ENCODE measurements at regions of chr17 and their contacts with region 1.

Region 1: DNA sequence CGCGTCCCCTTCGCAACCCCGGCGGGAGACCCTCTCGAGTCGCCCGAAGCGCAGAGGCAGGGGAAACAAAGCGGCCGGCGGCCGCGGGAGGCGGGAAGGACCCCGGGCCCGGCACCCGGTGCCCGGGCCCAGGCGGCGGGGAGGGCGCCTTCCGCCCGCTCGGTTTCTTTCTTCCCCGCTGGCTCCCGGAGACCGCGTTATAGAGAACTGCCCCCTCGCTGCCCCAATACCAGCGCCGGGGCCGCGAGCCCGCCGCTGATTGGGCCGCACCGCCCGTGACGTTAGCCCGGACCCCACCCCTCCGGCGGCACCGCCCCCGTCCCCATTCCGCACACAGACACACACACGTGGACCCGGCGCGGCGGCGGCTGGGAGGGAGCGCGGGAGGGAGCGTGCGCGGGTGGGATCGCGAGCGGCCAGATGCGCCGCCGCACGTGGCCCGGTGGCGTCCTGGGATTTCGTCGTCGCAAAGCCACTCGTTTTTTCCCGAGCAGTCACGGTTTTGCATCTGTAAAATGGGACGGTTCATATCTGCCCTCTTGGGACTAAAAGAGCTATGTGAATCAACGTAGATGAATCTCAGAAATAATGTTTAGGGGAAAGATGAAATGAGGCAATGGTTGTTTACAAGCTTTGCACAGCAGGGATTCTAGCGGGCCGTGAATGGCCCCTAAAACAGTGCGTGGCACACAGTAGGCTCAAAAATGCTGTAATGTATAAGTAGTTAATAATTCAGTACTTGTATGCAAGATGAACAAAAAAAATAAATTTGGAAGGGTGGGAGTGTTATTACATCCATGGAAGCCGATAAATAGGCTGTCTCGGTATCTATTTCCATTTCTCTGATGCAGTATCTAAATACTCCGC is at the start of gene EPOP:
- DNase-seq: peak; percentile 93
- ATAC-seq: peak; percentile 77
- H3K4me3 Mint-ChIP-seq: peak within 1 kb of the TSS; percentile 76
- H3K27ac Mint-ChIP-seq: peak within 1 kb of the TSS; percentile 75
- H3K4me1 Mint-ChIP-seq: peaks cover 41% of the 10 kb centered on the region
- H3K27me3 Mint-ChIP-seq: peaks cover 15% of the 10 kb centered on the region
- CTCF ChIP-seq: no peak
- total RNA-seq, gene EPOP: 31.8 to 32.2 TPM

Region 2: DNA sequence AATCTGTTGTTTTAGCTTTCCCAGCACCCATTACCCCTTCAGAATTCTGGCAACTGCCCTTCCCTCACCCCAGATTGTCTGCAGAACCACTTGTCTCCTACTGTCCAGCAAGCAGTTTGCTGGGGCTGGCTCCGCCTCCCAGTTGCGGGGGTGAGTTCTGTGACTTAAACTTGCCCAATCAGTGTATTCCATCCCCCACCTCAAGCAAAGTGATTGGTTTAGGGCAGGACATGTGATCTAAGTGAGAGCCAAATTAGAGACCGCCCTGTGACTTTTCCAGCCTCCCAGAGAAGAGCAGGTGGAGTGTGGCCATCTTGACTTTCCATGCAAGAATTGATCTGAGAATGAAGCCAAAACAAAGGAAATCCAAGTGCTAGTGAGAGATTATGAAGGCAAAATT is 46.5 kb before region 1 on chr17:
- CTCF ChIA-PET with region 1: no interaction called
- POLR2A ChIA-PET with region 1: no interaction called
- intact Hi-C with region 1: no loop called
- DNase-seq: peak; percentile 4
- ATAC-seq: peak; percentile 27
- H3K4me3 Mint-ChIP-seq: no peak overlapping the region
- H3K27ac Mint-ChIP-seq: no peak overlapping the region
- H3K4me1 Mint-ChIP-seq: peaks cover 4% of the 10 kb centered on the region
- H3K27me3 Mint-ChIP-seq: peaks cover 9% of the 10 kb centered on the region
- CTCF ChIP-seq: no peak

Region 3: DNA sequence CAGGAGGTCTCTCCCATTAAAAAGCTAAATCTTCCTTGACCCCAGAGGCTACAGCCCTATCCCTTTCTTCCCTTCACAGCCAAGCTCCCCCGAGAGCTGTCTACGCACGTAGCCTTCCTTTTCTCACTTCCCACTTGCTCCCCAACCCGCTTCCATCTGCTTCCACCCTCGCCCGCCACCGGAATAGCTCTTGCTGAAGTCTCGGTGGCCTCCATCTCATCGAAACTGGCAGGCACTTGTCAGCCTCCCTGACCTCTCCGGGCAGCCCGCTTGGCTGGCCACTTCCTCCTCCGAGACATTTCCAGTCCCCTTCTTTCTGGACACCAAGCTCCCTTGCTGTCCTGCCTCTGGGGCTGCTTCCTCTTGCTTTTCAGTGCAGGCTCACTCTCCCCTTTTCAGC is 10.5 kb after region 1 on chr17:
- CTCF ChIA-PET with region 1: interaction called, 18 read pairs
- POLR2A ChIA-PET with region 1: interaction called, 3 read pairs
- intact Hi-C with region 1: no loop called
- DNase-seq: no peak
- ATAC-seq: no peak
- H3K4me3 Mint-ChIP-seq: no peak overlapping the region
- H3K27ac Mint-ChIP-seq: no peak overlapping the region
- H3K4me1 Mint-ChIP-seq: peaks cover 3% of the 10 kb centered on the region
- H3K27me3 Mint-ChIP-seq: peaks cover 1% of the 10 kb centered on the region
- CTCF ChIP-seq: no peak

Region 4: DNA sequence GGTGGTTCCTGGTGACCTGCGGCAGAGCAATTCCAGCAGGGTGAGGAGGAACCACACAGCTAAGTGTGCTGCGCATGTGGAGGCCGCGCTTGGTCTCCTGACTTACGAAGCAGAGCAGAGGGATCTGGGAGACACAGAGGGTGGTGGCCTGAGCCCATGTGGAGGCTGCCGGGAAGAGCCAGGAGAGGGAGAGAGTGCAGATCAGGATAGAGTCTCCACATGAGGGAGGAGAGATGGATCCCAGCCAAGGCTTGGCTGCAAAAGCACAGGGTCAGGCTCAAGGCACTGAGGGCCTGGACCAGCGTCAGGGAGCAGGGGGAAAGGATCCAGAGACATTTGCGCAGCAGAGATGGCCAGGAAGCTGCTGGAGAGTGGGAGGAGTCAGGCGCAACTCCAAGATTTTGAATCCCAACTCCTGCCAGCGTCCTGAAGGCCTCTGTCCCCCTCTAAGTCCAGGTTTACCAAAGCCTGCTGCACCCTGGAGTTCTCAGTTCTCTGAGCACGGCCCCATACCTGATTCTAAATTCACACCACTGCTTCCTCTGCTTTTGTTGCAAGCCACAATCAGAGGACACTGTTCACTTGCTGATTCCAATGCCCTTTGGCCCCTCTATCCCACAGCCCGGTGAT is 18.8 kb after region 1 on chr17:
- CTCF ChIA-PET with region 1: interaction called, 32 read pairs
- POLR2A ChIA-PET with region 1: interaction called, 112 read pairs
- intact Hi-C with region 1: no loop called
- DNase-seq: no peak
- ATAC-seq: no peak
- H3K4me3 Mint-ChIP-seq: no peak overlapping the region
- H3K27ac Mint-ChIP-seq: no peak overlapping the region
- H3K4me1 Mint-ChIP-seq: peaks cover 21% of the 10 kb centered on the region
- H3K27me3 Mint-ChIP-seq: no peaks in the 10 kb centered on the region
- CTCF ChIP-seq: no peak

Region 5: DNA sequence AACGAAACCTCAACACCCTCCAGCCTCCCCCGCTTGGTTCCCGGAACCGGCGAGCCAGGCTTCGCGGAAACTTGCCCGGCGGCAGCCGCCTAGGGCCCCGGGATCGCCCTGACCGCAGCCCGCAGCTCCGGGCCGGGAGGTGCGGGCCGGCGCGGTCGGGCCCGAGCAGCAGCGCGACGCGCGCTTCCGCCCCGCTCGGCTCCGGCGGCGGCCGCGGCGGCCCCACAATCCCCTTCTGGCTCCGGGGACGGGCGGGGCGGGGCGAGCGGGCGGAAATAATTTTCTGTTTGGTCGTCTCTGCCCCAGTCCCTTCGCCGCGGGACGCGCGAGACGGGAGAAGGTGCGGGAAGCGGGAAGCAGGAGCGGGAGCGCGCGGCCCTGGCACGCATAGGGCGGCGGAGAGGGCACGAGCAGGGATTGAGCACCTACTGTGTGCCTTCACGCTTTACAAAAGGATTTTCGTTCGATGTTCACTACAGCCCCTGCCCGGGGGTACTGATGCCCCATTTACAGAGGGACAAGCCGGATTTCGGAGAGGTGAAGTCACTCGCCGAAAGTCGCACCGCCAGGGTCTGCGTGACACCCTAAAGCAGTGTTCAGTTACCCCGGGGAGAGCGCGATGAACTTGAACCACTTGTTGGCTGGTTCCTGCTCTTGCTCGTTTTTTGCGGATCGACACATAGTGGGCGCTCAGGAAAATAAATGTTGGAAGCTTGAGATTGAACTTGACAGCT is 27.4 kb after region 1 on chr17:
- CTCF ChIA-PET with region 1: interaction called, 32 read pairs
- POLR2A ChIA-PET with region 1: interaction called, 112 read pairs
- intact Hi-C with region 1: loop called (anchors 2 kb)
- DNase-seq: peak; percentile 86
- ATAC-seq: peak; percentile 6
- H3K4me3 Mint-ChIP-seq: peak overlapping the region; percentile 90
- H3K27ac Mint-ChIP-seq: peak overlapping the region; percentile 98
- H3K4me1 Mint-ChIP-seq: peaks cover 38% of the 10 kb centered on the region
- H3K27me3 Mint-ChIP-seq: no peaks in the 10 kb centered on the region
- CTCF ChIP-seq: no peak

Region 6: DNA sequence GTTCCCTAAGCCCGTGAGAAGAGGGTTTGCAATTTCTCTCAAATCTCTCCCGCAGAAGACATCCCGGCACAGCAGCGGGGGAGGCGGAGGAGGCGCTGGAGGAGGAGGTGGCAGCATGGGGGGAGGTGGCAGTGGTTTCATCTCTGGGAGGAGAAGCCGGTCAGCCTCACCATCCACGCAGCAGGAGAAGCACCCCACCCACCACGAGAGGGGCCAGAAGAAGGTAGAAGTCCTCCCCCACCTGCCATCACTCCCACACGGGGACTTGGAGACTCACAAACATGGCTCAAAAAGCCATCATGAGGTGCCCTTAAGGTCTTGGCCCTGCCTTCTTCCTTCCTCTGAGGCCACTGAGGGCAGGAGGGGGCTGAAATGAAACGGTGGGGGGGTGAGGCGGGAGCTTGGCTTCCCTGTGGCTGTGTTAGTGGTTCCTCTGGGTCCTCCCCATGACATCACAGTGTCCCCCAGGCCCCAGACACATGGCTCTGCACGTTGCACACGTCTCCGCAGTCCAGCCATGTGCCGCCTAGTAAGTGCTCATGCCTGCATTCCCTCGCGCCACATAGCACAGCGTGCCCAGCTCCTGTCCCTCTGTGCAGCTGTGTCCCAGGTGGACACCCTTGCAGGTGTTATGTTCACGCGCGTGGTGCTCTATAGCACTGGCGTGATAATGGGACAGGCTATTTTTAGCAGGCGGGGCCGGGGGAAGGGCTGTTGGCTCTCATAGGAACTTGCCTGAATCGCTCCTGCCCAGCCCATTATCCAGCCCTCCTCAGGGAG is 37.0 kb after region 1 on chr17:
- CTCF ChIA-PET with region 1: interaction called, 11 read pairs
- POLR2A ChIA-PET with region 1: interaction called, 112 read pairs
- intact Hi-C with region 1: loop called (anchors 5 kb)
- DNase-seq: peak; percentile 56
- ATAC-seq: peak; percentile 48
- H3K4me3 Mint-ChIP-seq: peak overlapping the region; percentile 28
- H3K27ac Mint-ChIP-seq: peak overlapping the region; percentile 80
- H3K4me1 Mint-ChIP-seq: peaks cover 76% of the 10 kb centered on the region
- H3K27me3 Mint-ChIP-seq: no peaks in the 10 kb centered on the region
- CTCF ChIP-seq: no peak

Region 7: DNA sequence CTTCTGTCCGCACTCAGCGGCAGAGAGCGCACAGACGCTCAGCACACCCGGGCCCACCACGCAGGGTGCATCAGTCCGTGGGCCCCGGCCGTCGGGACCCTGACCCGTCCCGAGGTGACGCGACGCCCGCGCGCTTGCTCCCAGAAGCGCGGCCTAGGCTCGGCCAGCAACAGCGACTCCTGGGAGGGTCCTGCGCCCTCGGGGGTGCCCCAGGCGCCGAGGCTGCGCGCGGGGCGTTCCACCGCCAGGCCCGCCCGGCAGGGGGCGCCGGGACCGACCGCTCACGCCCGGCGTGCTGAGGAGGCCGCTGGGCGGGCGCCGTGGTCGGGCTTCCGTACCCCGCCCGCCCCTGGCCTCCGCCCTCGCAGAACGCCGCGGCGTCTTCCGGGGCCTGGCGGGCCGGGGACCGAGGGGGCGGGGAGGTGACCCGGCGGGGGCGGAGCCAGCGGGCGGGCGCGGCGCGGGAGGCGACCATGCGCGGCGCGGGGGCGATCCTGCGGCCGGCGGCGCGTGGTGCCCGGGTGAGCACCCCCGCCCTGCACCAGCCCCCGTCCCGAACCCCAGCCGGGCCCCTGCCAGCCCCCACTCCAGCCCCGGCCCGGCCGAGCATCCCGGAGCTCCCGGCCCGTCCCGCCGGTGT is 55.0 kb after region 1 on chr17 and contains the start of gene CISD3:
- CTCF ChIA-PET with region 1: interaction called, 160 read pairs
- POLR2A ChIA-PET with region 1: interaction called, 33 read pairs
- intact Hi-C with region 1: loop called (anchors 2 kb)
- DNase-seq: peak; percentile 86
- ATAC-seq: peak; percentile 70
- H3K4me3 Mint-ChIP-seq: peak within 1 kb of the TSS; percentile 89
- H3K27ac Mint-ChIP-seq: peak within 1 kb of the TSS; percentile 99
- H3K4me1 Mint-ChIP-seq: peaks cover 80% of the 10 kb centered on the region
- H3K27me3 Mint-ChIP-seq: no peaks in the 10 kb centered on the region
- CTCF ChIP-seq: peak; percentile 59
- total RNA-seq, gene CISD3: 43.2 to 44.2 TPM

Region 8: DNA sequence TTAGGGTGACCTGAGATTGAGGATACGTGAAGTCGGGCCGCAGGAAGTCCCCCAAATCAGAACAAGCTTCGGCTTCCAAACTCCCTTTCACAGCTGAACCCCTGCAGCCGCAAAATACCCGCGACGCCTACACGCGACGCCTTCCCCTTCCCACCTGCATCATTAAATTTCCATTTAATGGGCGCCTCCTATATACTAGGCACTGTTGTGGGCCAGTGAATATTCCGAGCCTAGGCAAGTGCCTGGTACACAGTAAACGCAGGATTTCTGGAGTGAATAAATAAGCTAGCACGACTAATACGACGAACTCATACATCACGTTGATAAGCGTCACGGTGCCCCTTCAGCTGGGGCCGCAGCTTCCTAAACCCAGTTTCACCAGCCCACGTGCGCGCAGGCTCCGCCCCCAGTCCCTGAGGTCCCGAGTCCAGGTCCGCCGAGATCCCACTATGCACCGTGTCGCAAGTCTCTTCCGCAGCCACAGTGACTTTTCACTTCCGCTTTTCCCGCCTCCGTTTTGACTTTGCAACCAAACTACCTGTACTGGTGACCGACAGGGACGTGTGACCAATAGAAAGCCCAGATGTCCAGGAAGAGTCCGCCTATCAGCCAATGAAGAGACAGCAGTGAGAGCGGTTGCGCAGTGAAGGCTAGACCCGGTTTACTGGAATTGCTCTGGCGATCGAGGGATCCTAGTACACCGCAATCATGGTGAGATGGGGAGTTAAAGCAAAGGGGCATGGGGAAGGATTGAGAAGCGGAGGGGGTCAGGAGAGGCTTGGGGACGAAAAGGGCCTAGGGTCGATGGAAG is 77.3 kb after region 1 on chr17 and contains the start of gene PSMB3:
- CTCF ChIA-PET with region 1: interaction called, 10 read pairs
- POLR2A ChIA-PET with region 1: interaction called, 4 read pairs
- intact Hi-C with region 1: no loop called
- DNase-seq: peak; percentile 100
- ATAC-seq: peak; percentile 89
- H3K4me3 Mint-ChIP-seq: peak within 1 kb of the TSS; percentile 91
- H3K27ac Mint-ChIP-seq: peak within 1 kb of the TSS; percentile 96
- H3K4me1 Mint-ChIP-seq: peaks cover 39% of the 10 kb centered on the region
- H3K27me3 Mint-ChIP-seq: peaks cover 26% of the 10 kb centered on the region
- CTCF ChIP-seq: no peak
- total RNA-seq, gene PSMB3: 275 to 279 TPM

Measured in activated CD8-positive, alpha-beta T cell treated with anti-CD3 and anti-CD28 coated beads for 36 hours (primary cell).